Activated CD4-positive, alpha-beta T cell treated with anti-CD3 and anti-CD28 coated beads for 36 hours (primary cell): ENCODE measurements at regions of chr4 and their contacts with region 1.

Region 1: GRCh38 chr4:55435141-55435841 is 39.5 kb downstream of the TMEM165 start:
- DNase-seq: peak; percentile 62
- ATAC-seq: peak; percentile 96
- H3K4me3 Mint-ChIP-seq: no peak overlapping the region
- H3K27ac Mint-ChIP-seq: peak overlapping the region; percentile 73
- H3K4me1 Mint-ChIP-seq: peaks cover 15% of the 10 kb centered on the region
- H3K27me3 Mint-ChIP-seq: no peaks in the 10 kb centered on the region

Region 2: DNA sequence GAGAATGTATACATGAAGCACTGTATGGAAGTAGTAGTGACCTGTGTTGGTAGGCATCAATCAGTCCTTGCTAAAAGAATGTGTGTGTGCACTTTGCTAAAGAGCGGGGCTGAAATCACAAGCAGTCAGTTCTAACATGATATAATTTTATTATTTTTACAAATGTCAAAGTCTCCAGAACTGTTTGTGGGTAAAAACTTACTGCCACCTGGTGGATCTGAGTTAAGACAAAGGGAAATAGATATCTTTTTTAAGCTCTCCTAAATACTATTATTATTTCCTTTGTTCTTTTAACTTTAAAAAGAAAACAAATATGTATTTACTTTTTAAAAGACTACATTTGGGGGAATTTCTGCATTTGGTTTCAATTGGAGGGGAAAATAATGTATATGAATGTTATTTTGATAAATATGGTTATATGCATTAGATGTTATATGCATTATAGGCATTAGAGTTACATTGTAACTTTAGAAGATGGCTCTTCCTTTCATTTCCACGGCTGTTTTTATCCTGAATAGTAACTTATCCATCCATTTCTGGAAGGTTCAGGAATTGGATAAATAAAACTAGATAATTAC is 119.3 kb after region 1 on chr4:
- CTCF ChIA-PET with region 1: no interaction called
- POLR2A ChIA-PET with region 1: no interaction called
- intact Hi-C with region 1: loop called (anchors 5 kb)
- DNase-seq: no peak
- ATAC-seq: no peak
- H3K4me3 Mint-ChIP-seq: no peak overlapping the region
- H3K27ac Mint-ChIP-seq: no peak overlapping the region
- H3K4me1 Mint-ChIP-seq: peaks cover 10% of the 10 kb centered on the region
- H3K27me3 Mint-ChIP-seq: peaks cover 24% of the 10 kb centered on the region